ENCODE measurements at regions of chr15 and their contacts with region 1.

Region 1: DNA sequence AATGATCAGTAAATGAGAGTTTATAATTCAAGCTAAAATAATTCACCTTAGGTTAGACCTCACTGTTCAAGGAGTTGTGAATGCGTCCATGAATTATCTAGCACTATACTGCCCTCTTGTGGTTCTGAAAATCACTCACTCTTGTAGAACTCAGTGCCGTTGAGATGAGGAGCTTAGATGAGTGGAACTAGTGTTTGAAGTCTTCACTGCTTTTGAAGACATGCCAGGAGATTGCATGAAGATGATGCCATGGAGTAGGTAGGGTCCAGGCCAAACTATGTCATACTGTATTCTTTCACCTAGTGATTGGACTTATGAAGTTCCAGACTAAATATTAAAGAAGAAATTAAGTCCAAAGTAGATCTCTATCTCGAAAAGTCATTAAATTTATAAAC is 28.8 kb downstream of the LYSMD4 start:
- DNase-seq: peak in 1 of 2 donors; percentile 88
- ATAC-seq: peak; percentile 89 to 93 (median 90)
- H3K4me3 ChIP-seq: no peak overlapping the region
- H3K4me3 Mint-ChIP-seq: no peak overlapping the region
- H3K27ac ChIP-seq: no peak overlapping the region
- H3K27ac Mint-ChIP-seq: no peak overlapping the region
- H3K4me1 ChIP-seq: no peaks in the 10 kb centered on the region
- H3K4me1 Mint-ChIP-seq: peaks cover 5 to 6% of the 10 kb centered on the region in 2 donors
- H3K27me3 ChIP-seq: no peaks in the 10 kb centered on the region
- H3K27me3 Mint-ChIP-seq: no peaks in the 10 kb centered on the region
- CTCF ChIP-seq: peak; percentile 75

Region 2: GRCh38 chr15:99273801-99274200 is 430.6 kb before region 1 on chr15:
- intact Hi-C with region 1: loop called (anchors 1 kb)
- DNase-seq: no peak
- ATAC-seq: no peak
- H3K4me3 ChIP-seq: no peak overlapping the region
- H3K4me3 Mint-ChIP-seq: no peak overlapping the region
- H3K27ac ChIP-seq: no peak overlapping the region
- H3K27ac Mint-ChIP-seq: no peak overlapping the region
- H3K4me1 ChIP-seq: no peaks in the 10 kb centered on the region
- H3K4me1 Mint-ChIP-seq: peaks cover 1% of the 10 kb centered on the region in 2 donors
- H3K27me3 ChIP-seq: no peaks in the 10 kb centered on the region
- H3K27me3 Mint-ChIP-seq: no peaks in the 10 kb centered on the region
- CTCF ChIP-seq: no peak

Region 3: DNA sequence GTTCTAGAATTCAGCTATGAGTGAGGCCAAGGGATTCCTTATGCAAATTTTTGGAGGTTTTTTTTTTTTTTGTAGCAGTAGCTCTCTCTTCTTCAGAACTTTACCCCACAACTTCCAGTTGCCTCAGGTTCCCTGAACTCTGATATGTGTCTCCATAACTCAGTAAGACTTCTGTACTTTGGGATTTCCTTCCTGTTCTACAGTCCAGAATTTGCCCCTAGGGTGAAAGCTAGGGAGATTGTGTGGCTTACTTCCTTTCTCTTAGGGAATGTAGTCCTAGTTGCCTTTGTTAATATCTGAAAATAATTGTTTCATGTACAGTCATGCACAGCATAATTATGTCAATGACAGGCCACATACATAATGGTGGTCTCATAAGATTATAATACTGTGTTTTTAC is 422.3 kb before region 1 on chr15:
- intact Hi-C with region 1: loop called (anchors 1 kb)
- DNase-seq: no peak
- ATAC-seq: no peak
- H3K4me3 ChIP-seq: no peak overlapping the region
- H3K4me3 Mint-ChIP-seq: no peak overlapping the region
- H3K27ac ChIP-seq: no peak overlapping the region
- H3K27ac Mint-ChIP-seq: no peak overlapping the region
- H3K4me1 ChIP-seq: no peaks in the 10 kb centered on the region
- H3K4me1 Mint-ChIP-seq: peaks cover 21 to 22% of the 10 kb centered on the region in 2 donors
- H3K27me3 ChIP-seq: no peaks in the 10 kb centered on the region
- H3K27me3 Mint-ChIP-seq: no peaks in the 10 kb centered on the region
- CTCF ChIP-seq: no peak

Region 4: DNA sequence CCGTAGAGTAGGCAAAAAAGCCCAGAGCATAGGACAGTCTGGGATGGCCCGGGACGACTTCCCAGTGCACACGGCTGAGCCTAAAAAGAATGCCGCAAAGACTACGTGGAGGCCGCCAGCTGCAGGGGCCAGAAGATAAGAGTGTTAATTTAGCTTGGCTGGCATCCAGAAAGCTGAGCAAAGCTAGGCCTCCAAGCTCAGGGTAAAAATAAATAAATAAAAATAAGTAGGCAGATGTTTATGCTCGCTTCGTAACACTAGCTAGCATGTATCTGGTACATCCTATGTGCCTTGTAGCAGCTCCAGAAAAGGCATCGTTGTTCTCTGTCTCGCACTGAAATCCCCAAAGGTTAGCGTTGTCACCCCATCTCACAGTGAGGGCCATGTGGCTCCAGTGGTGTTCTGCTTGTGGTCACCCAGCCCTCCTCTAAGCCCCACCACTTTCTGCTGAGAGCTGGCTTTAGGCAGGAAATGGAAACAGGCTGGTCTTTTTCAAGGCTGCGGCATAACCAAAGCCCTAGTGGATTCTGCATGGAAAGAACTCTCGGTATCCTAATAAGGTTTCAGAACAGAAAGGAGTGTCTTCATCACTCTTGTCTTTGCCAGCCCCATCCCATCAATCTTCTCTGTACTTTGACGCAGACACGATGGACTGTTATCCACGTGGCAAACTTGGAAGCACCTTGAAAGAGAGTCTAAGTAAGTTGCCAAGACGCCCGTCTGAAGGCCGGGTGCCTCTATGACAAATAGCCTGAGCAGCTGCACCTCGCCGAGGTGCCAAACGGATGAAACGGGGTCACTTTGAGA is 196.7 kb before region 1 on chr15:
- intact Hi-C with region 1: loop called (anchors 5 kb)
- DNase-seq: peak; percentile 24 to 54
- ATAC-seq: peak; percentile 76 to 94 (median 80)
- H3K4me3 ChIP-seq: no peak overlapping the region
- H3K4me3 Mint-ChIP-seq: peak overlapping the region; percentile 63
- H3K27ac ChIP-seq: peak overlapping the region; percentile 6
- H3K27ac Mint-ChIP-seq: peak overlapping the region in 1 of 2 donors; percentile 74
- H3K4me1 ChIP-seq: peaks cover 78% of the 10 kb centered on the region
- H3K4me1 Mint-ChIP-seq: peaks cover 50 to 59% of the 10 kb centered on the region in 2 donors
- H3K27me3 ChIP-seq: no peaks in the 10 kb centered on the region
- H3K27me3 Mint-ChIP-seq: peaks cover 14 to 41% of the 10 kb centered on the region in 2 donors
- CTCF ChIP-seq: no peak

Region 5: DNA sequence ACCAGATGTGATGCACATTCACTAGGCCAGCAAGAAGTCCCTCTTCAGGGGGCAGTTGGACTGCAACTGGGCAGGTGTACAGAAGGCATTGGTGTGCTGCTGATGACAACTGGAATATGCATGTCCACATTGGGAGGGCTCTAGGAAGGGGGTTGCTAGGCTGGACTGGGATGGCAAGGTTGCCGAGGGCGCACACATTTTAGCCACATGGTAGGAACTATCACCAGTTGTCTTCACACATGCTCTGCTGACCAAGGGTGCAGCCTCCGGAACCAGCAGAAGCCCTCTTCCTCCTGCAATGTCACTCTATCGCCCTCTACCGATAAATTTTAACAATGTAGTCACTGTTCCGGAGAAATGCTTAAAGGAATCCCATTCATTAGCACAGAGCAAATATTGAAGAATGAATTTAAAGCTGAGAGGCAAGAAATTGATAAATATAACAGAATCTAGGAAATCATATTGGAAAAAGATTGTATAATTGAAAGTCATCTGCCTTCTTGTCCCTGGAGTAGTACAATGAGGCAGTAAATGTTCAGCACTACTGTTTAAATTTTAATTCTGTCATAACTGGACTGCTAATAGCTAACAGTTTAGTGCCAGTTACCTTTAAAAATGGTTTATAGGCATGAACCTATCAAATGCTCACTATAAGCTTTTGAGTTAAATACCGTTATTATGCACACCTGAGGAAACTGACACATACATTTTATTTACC is 51.4 kb after region 1 on chr15:
- intact Hi-C with region 1: loop called (anchors 5 kb)
- DNase-seq: peak in 1 of 2 donors; percentile 79
- ATAC-seq: peak in 2 of 3 donors; percentile 83 to 88
- H3K4me3 ChIP-seq: no peak overlapping the region
- H3K4me3 Mint-ChIP-seq: no peak overlapping the region
- H3K27ac ChIP-seq: no peak overlapping the region
- H3K27ac Mint-ChIP-seq: no peak overlapping the region
- H3K4me1 ChIP-seq: peaks cover 5% of the 10 kb centered on the region
- H3K4me1 Mint-ChIP-seq: no peaks in the 10 kb centered on the region
- H3K27me3 ChIP-seq: no peaks in the 10 kb centered on the region
- H3K27me3 Mint-ChIP-seq: peaks cover 3 to 8% of the 10 kb centered on the region in 2 donors
- CTCF ChIP-seq: peak; percentile 76

Region 6: GRCh38 chr15:100017140-100017539 is 312.7 kb after region 1 on chr15:
- intact Hi-C with region 1: no loop called
- DNase-seq: no peak
- ATAC-seq: no peak
- H3K4me3 ChIP-seq: no peak overlapping the region
- H3K4me3 Mint-ChIP-seq: no peak overlapping the region
- H3K27ac ChIP-seq: no peak overlapping the region
- H3K27ac Mint-ChIP-seq: no peak overlapping the region
- H3K4me1 ChIP-seq: no peaks in the 10 kb centered on the region
- H3K4me1 Mint-ChIP-seq: no peaks in the 10 kb centered on the region
- H3K27me3 ChIP-seq: no peaks in the 10 kb centered on the region
- H3K27me3 Mint-ChIP-seq: peaks cover 15 to 26% of the 10 kb centered on the region in 2 donors
- CTCF ChIP-seq: no peak